CD8-positive, alpha-beta T cell (primary cell): ENCODE measurements at regions of chr22 and their contacts with region 1.

Region 1: DNA sequence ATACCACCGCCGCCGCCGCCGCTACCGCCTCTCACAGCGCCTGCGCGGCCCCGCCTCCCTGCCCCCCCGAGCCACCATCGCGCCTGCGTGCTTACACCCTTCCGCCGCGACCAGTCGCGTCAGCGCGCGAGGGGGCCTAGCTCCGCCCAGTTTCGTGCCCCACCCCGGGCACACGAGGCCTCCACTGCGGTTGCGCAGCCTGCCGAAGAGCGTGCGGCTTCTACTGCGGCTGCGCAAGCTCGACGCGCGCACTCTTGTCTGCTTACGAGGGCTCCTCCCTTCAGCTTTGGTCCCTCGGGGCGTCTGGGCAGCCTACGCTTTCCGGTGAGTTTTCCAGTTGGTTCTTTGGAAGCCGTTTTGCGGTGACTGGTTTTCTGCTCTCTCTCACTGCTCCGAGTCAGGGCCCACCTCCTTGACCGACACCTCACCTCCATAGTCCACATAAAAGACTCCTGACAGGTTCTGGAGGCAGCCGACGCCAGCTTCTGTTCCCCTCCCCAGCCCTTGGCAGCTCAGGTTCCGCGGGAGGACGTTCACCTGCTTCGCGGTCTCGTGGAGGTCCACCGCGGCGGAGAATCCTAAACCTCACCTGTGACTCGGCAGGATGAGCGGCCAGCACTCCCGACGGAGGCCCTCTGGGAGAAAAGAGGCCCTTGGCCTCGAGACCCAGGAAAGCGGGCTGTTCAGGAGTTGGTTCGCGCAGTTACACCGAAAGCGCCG is at the start of gene PITPNB:
- DNase-seq: peak; percentile 98 to 100 (median 99)
- ATAC-seq: peak; percentile 89
- H3K4me3 ChIP-seq: peak within 1 kb of the TSS; percentile 66 to 82
- H3K4me3 Mint-ChIP-seq: peak within 1 kb of the TSS; percentile 98
- H3K27ac ChIP-seq: peak within 1 kb of the TSS; percentile 87 to 98
- H3K27ac Mint-ChIP-seq: peak within 1 kb of the TSS; percentile 99
- H3K4me1 ChIP-seq: peaks cover 25% of the 10 kb centered on the region
- H3K4me1 Mint-ChIP-seq: peaks cover 68% of the 10 kb centered on the region
- H3K27me3 ChIP-seq: no peaks in the 10 kb centered on the region
- H3K27me3 Mint-ChIP-seq: no peaks in the 10 kb centered on the region
- CTCF ChIP-seq: no peak
- total RNA-seq, gene PITPNB: 40.8 to 41.5 TPM

Region 2: DNA sequence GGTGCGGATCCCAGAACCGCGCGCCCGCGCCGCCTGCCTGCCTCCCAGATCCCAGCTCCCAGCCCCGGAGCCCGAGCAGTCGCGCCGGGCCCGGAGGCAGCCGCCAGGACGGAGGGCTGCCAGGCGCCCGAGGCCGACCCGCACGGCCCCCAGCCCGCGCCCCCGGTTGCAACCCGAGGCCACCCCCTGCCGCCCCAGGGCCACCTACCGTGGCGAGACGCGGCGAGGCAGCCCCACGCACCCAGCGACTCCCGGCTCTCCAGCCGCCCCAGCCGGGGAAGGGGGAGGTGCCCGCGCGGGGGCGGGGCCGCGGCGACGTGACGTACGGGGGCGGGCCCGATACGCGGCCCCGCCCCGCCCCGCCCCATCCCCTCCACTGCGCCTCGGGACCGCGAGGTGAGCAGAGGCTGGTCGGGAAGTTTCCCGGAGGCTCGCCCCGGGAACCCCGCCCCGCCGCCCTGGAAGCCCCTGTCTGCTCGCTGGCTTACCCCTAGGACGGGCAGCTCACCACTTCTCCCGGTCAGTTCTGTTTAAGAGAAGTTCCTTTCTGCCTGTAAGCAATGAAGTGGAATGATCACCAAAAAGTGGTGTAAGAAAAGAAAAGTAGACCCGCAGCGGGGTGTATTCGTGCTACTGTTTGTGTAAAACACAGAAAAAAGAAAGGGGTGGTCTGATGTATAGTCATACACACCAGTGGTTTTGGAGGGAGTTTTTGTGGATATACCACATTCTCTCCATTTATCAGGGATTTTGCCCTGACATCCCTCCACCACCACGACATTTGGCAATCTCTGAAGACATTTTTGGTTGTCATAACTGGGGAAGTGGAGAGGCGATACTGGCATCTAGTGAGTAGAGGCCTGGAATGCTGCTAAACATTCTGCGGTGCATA is 1329.3 kb before region 1 on chr22 and contains the start of gene TPST2:
- CTCF ChIA-PET with region 1: no interaction called
- POLR2A ChIA-PET with region 1: no interaction called
- intact Hi-C with region 1: loop called in 1 of 2 experiments (anchors 1 kb)
- DNase-seq: peak; percentile 64 to 90 (median 77)
- ATAC-seq: peak; percentile 81
- H3K4me3 ChIP-seq: peak within 1 kb of the TSS; percentile 75 to 88
- H3K4me3 Mint-ChIP-seq: peak within 1 kb of the TSS; percentile 94
- H3K27ac ChIP-seq: peak within 1 kb of the TSS; percentile 75 to 85
- H3K27ac Mint-ChIP-seq: peak within 1 kb of the TSS; percentile 96
- H3K4me1 ChIP-seq: peaks cover 79% of the 10 kb centered on the region
- H3K4me1 Mint-ChIP-seq: peaks cover 80% of the 10 kb centered on the region
- H3K27me3 ChIP-seq: no peaks in the 10 kb centered on the region
- H3K27me3 Mint-ChIP-seq: no peaks in the 10 kb centered on the region
- CTCF ChIP-seq: no peak
- total RNA-seq, gene TPST2: 24.3 to 26.3 TPM

Region 3: GRCh38 chr22:27937453-27937852 is 18.1 kb after region 1 on chr22:
- CTCF ChIA-PET with region 1: no interaction called
- POLR2A ChIA-PET with region 1: no interaction called
- intact Hi-C with region 1: no loop called
- DNase-seq: no peak
- ATAC-seq: no peak
- H3K4me3 ChIP-seq: no peak overlapping the region
- H3K4me3 Mint-ChIP-seq: no peak overlapping the region
- H3K27ac ChIP-seq: no peak overlapping the region
- H3K27ac Mint-ChIP-seq: no peak overlapping the region
- H3K4me1 ChIP-seq: no peaks in the 10 kb centered on the region
- H3K4me1 Mint-ChIP-seq: no peaks in the 10 kb centered on the region
- H3K27me3 ChIP-seq: no peaks in the 10 kb centered on the region
- H3K27me3 Mint-ChIP-seq: no peaks in the 10 kb centered on the region
- CTCF ChIP-seq: no peak

Region 4: DNA sequence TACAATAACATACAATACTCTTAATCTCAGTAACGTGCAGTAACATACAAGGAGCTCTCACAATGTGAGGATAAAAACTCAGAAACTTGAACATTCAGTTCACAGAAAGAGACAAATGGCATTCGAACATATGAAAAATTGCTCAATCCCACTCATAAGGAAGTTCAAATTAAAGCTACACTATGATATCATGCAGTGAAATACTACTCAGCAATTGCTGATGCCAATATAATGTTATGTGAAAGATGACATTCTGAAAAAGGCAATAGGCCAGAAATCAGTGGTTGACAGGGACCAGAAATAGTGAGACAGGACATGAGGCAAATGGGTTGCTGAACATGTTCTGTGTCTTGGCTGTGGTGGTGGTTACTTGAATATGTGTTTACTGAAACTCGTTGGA is 33.4 kb after region 1 on chr22:
- CTCF ChIA-PET with region 1: no interaction called
- POLR2A ChIA-PET with region 1: no interaction called
- intact Hi-C with region 1: loop called in 1 of 2 experiments (anchors 1 kb)
- DNase-seq: no peak
- ATAC-seq: no peak
- H3K4me3 ChIP-seq: no peak overlapping the region
- H3K4me3 Mint-ChIP-seq: no peak overlapping the region
- H3K27ac ChIP-seq: no peak overlapping the region
- H3K27ac Mint-ChIP-seq: no peak overlapping the region
- H3K4me1 ChIP-seq: no peaks in the 10 kb centered on the region
- H3K4me1 Mint-ChIP-seq: no peaks in the 10 kb centered on the region
- H3K27me3 ChIP-seq: no peaks in the 10 kb centered on the region
- H3K27me3 Mint-ChIP-seq: no peaks in the 10 kb centered on the region
- CTCF ChIP-seq: no peak

Region 5: GRCh38 chr22:27972732-27973698 is 53.6 kb after region 1 on chr22:
- CTCF ChIA-PET with region 1: no interaction called
- POLR2A ChIA-PET with region 1: no interaction called
- intact Hi-C with region 1: no loop called
- DNase-seq: no peak
- ATAC-seq: no peak
- H3K4me3 ChIP-seq: no peak overlapping the region
- H3K4me3 Mint-ChIP-seq: no peak overlapping the region
- H3K27ac ChIP-seq: no peak overlapping the region
- H3K27ac Mint-ChIP-seq: no peak overlapping the region
- H3K4me1 ChIP-seq: no peaks in the 10 kb centered on the region
- H3K4me1 Mint-ChIP-seq: peaks cover 2% of the 10 kb centered on the region
- H3K27me3 ChIP-seq: no peaks in the 10 kb centered on the region
- H3K27me3 Mint-ChIP-seq: no peaks in the 10 kb centered on the region
- CTCF ChIP-seq: no peak

Region 6: DNA sequence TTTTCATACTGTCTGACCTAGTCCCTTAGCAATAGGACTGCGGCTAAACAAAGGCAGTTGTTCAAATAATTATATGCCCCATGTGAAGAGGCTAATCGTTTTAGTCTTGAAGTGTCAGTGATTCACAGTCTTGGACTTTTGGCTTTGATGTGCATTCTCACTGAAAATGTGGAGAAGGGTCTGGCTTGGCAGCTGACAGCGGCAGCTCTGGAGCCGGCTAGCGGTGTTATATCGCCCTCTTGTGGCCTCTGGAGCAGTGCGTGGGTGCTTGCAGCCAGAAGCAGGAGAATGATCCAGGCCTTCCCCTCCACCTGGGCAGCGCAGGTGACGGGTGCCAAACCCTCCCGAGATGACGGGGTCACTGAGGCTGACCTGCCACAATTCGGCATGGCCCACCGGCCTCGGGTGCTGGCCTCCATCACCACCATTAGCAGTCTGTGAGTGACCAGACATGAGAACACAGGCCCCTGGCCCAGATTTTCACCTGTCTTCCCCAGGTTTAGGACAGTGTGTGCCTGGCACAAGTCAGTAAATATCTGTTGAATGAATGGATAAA is 90.0 kb after region 1 on chr22:
- CTCF ChIA-PET with region 1: no interaction called
- POLR2A ChIA-PET with region 1: no interaction called
- intact Hi-C with region 1: no loop called
- DNase-seq: peak; percentile 46 to 81 (median 71)
- ATAC-seq: peak; percentile 71
- H3K4me3 ChIP-seq: no peak overlapping the region
- H3K4me3 Mint-ChIP-seq: no peak overlapping the region
- H3K27ac ChIP-seq: no peak overlapping the region
- H3K27ac Mint-ChIP-seq: no peak overlapping the region
- H3K4me1 ChIP-seq: no peaks in the 10 kb centered on the region
- H3K4me1 Mint-ChIP-seq: no peaks in the 10 kb centered on the region
- H3K27me3 ChIP-seq: no peaks in the 10 kb centered on the region
- H3K27me3 Mint-ChIP-seq: no peaks in the 10 kb centered on the region
- CTCF ChIP-seq: peak; percentile 92

Region 7: DNA sequence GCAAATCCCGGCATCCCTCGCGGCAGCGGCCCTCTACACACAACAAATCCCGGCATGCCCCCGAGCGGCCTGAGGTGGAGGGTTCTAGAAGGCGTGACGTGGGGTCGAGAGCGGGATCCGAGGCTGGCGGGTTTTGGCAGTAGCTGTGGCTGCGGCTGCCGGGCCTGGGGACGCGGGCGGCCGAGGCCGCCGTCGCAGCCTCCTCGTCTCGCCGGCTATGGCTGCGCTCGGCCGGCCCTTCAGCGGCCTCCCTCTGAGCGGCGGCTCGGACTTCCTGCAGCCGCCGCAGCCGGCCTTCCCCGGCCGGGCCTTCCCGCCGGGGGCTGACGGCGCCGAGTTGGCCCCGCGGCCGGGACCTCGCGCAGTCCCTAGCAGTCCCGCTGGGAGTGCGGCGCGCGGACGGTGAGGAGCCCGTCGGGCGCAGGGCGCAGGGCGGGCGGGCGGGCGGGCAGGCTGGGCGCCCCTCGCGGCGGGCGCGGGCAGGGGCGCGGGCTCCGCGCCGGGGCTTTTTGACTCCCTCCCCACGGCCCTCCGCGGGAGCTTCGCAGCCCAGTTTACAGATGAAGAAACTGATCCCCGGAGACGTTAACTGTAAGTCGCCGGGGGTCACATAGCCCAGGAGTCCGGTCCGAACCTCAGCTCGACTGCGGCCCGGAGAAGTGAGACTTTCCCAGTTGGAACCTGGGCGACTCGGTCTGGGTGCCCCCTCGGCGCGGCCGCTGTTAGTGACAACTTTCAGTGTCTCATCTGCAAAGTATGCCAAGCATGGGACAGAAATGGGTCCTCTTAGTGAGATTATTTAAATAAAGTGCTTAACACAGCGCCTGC is 853.5 kb after region 1 on chr22 and contains the start of gene CCDC117:
- CTCF ChIA-PET with region 1: no interaction called
- POLR2A ChIA-PET with region 1: interaction called, 3 read pairs
- intact Hi-C with region 1: loop called in 1 of 2 experiments (anchors 1 kb)
- DNase-seq: peak; percentile 85 to 96 (median 94)
- ATAC-seq: peak; percentile 94
- H3K4me3 ChIP-seq: peak within 1 kb of the TSS; percentile 60 to 65
- H3K4me3 Mint-ChIP-seq: peak within 1 kb of the TSS; percentile 94
- H3K27ac ChIP-seq: peak within 1 kb of the TSS; percentile 68 to 77
- H3K27ac Mint-ChIP-seq: peak within 1 kb of the TSS; percentile 94
- H3K4me1 ChIP-seq: peaks cover 26% of the 10 kb centered on the region
- H3K4me1 Mint-ChIP-seq: peaks cover 30% of the 10 kb centered on the region
- H3K27me3 ChIP-seq: no peaks in the 10 kb centered on the region
- H3K27me3 Mint-ChIP-seq: no peaks in the 10 kb centered on the region
- CTCF ChIP-seq: peak; percentile 31
- total RNA-seq, gene CCDC117: 13.7 to 15.4 TPM

Region 8: DNA sequence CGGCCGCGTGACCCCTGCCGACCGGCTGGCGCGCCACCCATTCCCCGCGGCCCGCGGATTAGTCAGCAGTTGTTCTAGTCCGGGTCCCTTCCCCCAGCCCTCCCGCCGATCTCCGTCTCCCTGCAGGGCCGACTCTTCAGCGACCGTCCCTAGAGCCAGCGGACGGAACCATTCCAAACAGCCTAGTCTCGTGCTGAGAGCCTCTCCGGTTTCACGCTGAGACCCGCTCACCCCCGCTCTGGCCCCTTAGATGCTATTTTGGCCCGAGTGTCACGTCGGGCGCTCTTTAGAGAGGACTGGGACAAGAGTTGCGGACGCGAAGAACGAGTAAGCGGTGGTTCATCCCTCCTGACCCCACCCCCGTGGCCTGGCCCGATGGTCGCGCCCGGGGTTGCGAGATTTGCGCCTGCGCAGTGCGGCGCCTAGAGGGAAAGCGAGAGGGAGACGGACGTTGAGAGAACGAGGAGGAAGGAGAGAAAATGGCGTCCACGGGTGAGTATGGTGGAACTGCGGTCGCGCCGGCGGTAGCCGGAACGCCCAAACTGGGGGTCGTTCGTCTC is 1348.6 kb after region 1 on chr22 and contains the starts of genes EWSR1 and RHBDD3:
- CTCF ChIA-PET with region 1: no interaction called
- POLR2A ChIA-PET with region 1: no interaction called
- intact Hi-C with region 1: loop called (anchors 5 to 10 kb)
- DNase-seq: peak; percentile 92 to 99 (median 96)
- ATAC-seq: peak; percentile 85
- H3K4me3 ChIP-seq: peak within 1 kb of the TSS; percentile 87 to 100
- H3K4me3 Mint-ChIP-seq: peak within 1 kb of the TSS; percentile 95
- H3K27ac ChIP-seq: peak within 1 kb of the TSS; percentile 98 to 100
- H3K27ac Mint-ChIP-seq: peak within 1 kb of the TSS; percentile 97
- H3K4me1 ChIP-seq: peaks cover 50% of the 10 kb centered on the region
- H3K4me1 Mint-ChIP-seq: peaks cover 56% of the 10 kb centered on the region
- H3K27me3 ChIP-seq: no peaks in the 10 kb centered on the region
- H3K27me3 Mint-ChIP-seq: no peaks in the 10 kb centered on the region
- CTCF ChIP-seq: no peak
- total RNA-seq, gene EWSR1: 326 to 352 TPM
- total RNA-seq, gene RHBDD3: 10.2 to 10.9 TPM